ENCODE measurements at regions of chr7 and their contacts with region 1.

Region 1: DNA sequence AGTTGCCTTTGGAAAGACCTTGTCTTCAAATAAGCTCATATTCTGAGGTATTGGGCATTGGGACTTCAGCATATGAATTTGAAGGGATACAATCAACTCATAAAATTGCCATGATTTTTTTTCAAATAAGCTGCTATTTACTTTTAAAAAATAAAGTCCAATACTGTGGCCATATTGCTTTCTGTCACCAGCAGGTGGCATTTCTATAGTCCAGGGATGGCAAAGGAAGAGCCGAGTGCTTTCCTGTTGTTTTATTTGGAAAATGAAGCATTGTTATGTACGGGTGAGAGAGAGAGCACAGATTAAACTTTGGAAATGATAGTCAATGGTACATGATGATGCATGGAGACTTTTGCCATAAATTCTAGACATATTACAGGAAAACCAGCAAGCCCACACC is 104.1 kb upstream of the DPP6 start:
- DNase-seq: no peak
- ATAC-seq: no peak
- H3K4me3 ChIP-seq: no peak overlapping the region
- H3K27ac ChIP-seq: no peak overlapping the region
- H3K4me1 ChIP-seq: no peaks in the 10 kb centered on the region
- H3K27me3 ChIP-seq: peaks cover 2% of the 10 kb centered on the region; the same call in 1 of the 2 replicates
- CTCF ChIP-seq: peak; percentile 41

Region 2: GRCh38 chr7:153934629-153935028 is 13.4 kb before region 1 on chr7:
- CTCF ChIA-PET with region 1: interaction called, 11 read pairs
- POLR2A ChIA-PET with region 1: no interaction called
- in situ Hi-C with region 1: no loop called
- intact Hi-C with region 1: no loop called
- DNase-seq: no peak
- ATAC-seq: no peak
- H3K4me3 ChIP-seq: no peak overlapping the region
- H3K27ac ChIP-seq: no peak overlapping the region
- H3K4me1 ChIP-seq: no peaks in the 10 kb centered on the region
- H3K27me3 ChIP-seq: no peaks in the 10 kb centered on the region
- CTCF ChIP-seq: no peak